ENCODE measurements at regions of chr10 and their contacts with region 1.

Region 1: GRCh38 chr10:117496616-117497028 is 45.9 kb upstream of the EMX2 start:
- DNase-seq: peak; percentile 63
- ATAC-seq: peak; percentile 93
- H3K4me3 ChIP-seq: no peak overlapping the region
- H3K27ac ChIP-seq: no peak overlapping the region
- H3K4me1 ChIP-seq: no peaks in the 10 kb centered on the region
- H3K27me3 ChIP-seq: peaks cover 19% of the 10 kb centered on the region
- CTCF ChIP-seq: peak; percentile 98

Region 2: DNA sequence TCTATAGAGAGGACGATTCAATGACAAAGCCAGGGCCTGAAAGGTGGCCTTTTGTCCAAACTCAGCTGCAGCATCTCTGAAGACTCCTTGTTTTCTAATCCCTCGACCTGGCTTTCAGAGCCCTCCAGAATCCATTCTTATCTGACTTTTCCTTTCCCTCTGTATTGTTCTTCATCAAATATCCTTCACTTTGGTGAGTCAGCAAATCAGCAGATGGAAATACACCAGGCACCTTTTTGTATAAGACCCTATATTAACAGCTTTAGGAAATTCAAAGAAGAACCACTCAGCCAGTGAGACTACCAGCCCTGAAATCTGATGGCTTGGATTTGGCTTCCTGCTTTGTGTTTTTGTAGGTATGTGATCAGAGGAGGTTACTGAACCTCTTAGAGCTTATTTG is 632.1 kb after region 1 on chr10:
- CTCF ChIA-PET with region 1: interaction called, 10 read pairs
- POLR2A ChIA-PET with region 1: no interaction called
- in situ Hi-C with region 1: no loop called
- intact Hi-C with region 1: no loop called
- DNase-seq: no peak
- ATAC-seq: no peak
- H3K4me3 ChIP-seq: no peak overlapping the region
- H3K27ac ChIP-seq: no peak overlapping the region
- H3K4me1 ChIP-seq: no peaks in the 10 kb centered on the region
- H3K27me3 ChIP-seq: no peaks in the 10 kb centered on the region
- CTCF ChIP-seq: no peak

Region 3: DNA sequence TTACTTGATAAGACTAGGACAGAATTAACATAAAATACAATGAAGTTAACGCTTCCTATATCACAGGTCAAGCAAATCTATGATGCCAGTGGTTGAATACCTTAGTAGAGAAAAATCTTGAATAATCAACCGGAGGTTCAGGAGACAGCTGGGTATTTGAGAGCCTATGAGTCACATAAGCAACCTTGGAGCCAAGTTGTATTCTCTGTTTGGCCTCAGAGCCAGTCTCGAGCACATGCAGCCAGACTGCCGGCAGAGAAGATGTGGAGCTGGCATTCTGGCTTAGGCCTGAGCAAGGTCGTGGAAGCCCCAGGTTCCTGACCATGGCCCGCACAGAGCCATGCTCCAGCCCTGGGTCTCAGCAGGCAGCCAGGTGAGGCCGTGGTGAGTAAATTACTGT is 755.2 kb after region 1 on chr10:
- CTCF ChIA-PET with region 1: no interaction called
- POLR2A ChIA-PET with region 1: no interaction called
- in situ Hi-C with region 1: no loop called
- intact Hi-C with region 1: loop called (anchors 5 kb)
- DNase-seq: no peak
- ATAC-seq: no peak
- H3K4me3 ChIP-seq: no peak overlapping the region
- H3K27ac ChIP-seq: no peak overlapping the region
- H3K4me1 ChIP-seq: no peaks in the 10 kb centered on the region
- H3K27me3 ChIP-seq: peaks cover 28% of the 10 kb centered on the region
- CTCF ChIP-seq: no peak

Region 4: GRCh38 chr10:118459726-118460193 is 963.1 kb after region 1 on chr10:
- CTCF ChIA-PET with region 1: interaction called, 3 read pairs
- POLR2A ChIA-PET with region 1: no interaction called
- in situ Hi-C with region 1: no loop called
- intact Hi-C with region 1: loop called (anchors 1 kb)
- DNase-seq: peak; percentile 52
- ATAC-seq: peak; percentile 99
- H3K4me3 ChIP-seq: no peak overlapping the region
- H3K27ac ChIP-seq: no peak overlapping the region
- H3K4me1 ChIP-seq: 0 out of 2 replicates have a peak, but pooled peaks cover 4% of the 10 kb centered on the region
- H3K27me3 ChIP-seq: peaks cover 33% of the 10 kb centered on the region
- CTCF ChIP-seq: peak; percentile 91

Region 5: GRCh38 chr10:119323085-119324016 is 1826.7 kb after region 1 on chr10:
- CTCF ChIA-PET with region 1: interaction called, 16 read pairs
- POLR2A ChIA-PET with region 1: no interaction called
- in situ Hi-C with region 1: no loop called
- intact Hi-C with region 1: no loop called
- DNase-seq: no peak
- ATAC-seq: no peak
- H3K4me3 ChIP-seq: no peak overlapping the region
- H3K27ac ChIP-seq: no peak overlapping the region
- H3K4me1 ChIP-seq: peaks cover 28% of the 10 kb centered on the region
- H3K27me3 ChIP-seq: no peaks in the 10 kb centered on the region
- CTCF ChIP-seq: no peak

Measured in Panc1 (cell line).